Activated T-helper 2 cell treated with anti-CD3 and anti-CD28 coated beads, Interferon-gamma antibody, Interleukin-2, Interleukin-4, amounts not matched to agents 10 μg/mL and 5 μg/mL and 100 μg/mL, durations not matched to agents 14 hours and 24 hours and 36 hours (primary cell): ENCODE measurements at regions of chr11 and their contacts with region 1.

Region 1: GRCh38 chr11:10540923-10541560 is at the start of gene RNF141:
- DNase-seq: peak; percentile 92
- H3K4me3 Mint-ChIP-seq: peak within 1 kb of the TSS; percentile 89
- H3K27ac Mint-ChIP-seq: peak within 1 kb of the TSS; percentile 60
- H3K4me1 Mint-ChIP-seq: peaks cover 17% of the 10 kb centered on the region
- H3K27me3 Mint-ChIP-seq: peaks cover 1% of the 10 kb centered on the region
- total RNA-seq, gene RNF141: 13.2 and 15.6 TPM in 2 replicates

Region 2: GRCh38 chr11:10413268-10413667 is 127.8 kb before region 1 on chr11:
- intact Hi-C with region 1: loop called (anchors 2 kb)
- DNase-seq: no peak
- H3K4me3 Mint-ChIP-seq: no peak overlapping the region
- H3K27ac Mint-ChIP-seq: no peak overlapping the region
- H3K4me1 Mint-ChIP-seq: peaks cover 24% of the 10 kb centered on the region
- H3K27me3 Mint-ChIP-seq: peaks cover 17% of the 10 kb centered on the region

Region 3: GRCh38 chr11:10526974-10527918 is 13.8 kb before region 1 on chr11:
- intact Hi-C with region 1: loop called (anchors 2 kb)
- DNase-seq: no peak
- H3K4me3 Mint-ChIP-seq: no peak overlapping the region
- H3K27ac Mint-ChIP-seq: peak overlapping the region; percentile 35
- H3K4me1 Mint-ChIP-seq: peaks cover 16% of the 10 kb centered on the region
- H3K27me3 Mint-ChIP-seq: no peaks in the 10 kb centered on the region